ENCODE measurements at regions of chr5 and their contacts with region 1.

Region 1: GRCh38 chr5:120382833-120383232 is 81.3 kb upstream of the PRR16 start:
- DNase-seq: no peak
- H3K4me3 Mint-ChIP-seq: no peak overlapping the region
- H3K27ac Mint-ChIP-seq: no peak overlapping the region
- H3K4me1 Mint-ChIP-seq: peaks cover 7% of the 10 kb centered on the region
- H3K27me3 Mint-ChIP-seq: no peaks in the 10 kb centered on the region

Region 2: GRCh38 chr5:119873611-119874010 is 509.2 kb before region 1 on chr5:
- intact Hi-C with region 1: no loop called
- DNase-seq: no peak
- H3K4me3 Mint-ChIP-seq: no peak overlapping the region
- H3K27ac Mint-ChIP-seq: no peak overlapping the region
- H3K4me1 Mint-ChIP-seq: no peaks in the 10 kb centered on the region
- H3K27me3 Mint-ChIP-seq: no peaks in the 10 kb centered on the region

Region 3: DNA sequence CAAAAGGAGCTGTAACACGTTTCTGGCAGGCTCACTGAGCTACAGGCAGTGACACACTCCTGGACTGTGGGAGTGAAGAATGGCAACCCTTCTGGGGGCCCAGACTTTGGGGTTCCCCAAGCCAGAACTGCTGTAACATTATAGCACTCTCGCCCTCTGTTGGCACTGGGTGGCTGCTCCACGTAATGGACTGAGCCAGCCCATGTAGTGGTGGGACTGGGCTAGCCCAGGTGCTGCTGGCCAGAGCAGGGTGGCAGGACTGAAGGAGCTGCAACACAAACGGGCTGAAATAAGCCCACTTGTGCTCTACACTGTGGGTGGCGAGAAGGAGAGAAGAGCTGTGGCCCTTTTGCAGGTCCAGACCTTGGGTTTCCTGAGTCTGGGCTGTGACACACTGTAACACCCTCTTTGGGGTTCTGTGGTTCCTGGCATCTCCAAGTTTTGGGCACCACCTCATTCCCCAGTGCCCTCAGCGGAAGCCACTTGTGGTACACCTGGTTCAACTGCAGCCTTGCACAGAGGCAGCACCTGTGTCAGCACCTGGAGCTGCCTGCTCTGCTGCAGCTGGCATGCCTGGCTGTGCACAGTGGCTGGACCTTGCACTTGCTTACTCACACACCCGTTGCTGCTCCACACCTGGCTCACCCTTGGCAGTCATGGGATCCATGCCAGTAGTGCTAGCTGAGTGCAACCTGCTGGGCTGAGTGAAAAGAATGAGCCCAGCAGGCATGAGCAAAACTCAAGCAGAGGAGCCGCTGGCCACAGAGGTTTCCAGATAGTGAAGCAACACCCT is 13.7 kb before region 1 on chr5:
- intact Hi-C with region 1: loop called (anchors 1 kb)
- DNase-seq: no peak
- H3K4me3 Mint-ChIP-seq: no peak overlapping the region
- H3K27ac Mint-ChIP-seq: no peak overlapping the region
- H3K4me1 Mint-ChIP-seq: no peaks in the 10 kb centered on the region
- H3K27me3 Mint-ChIP-seq: no peaks in the 10 kb centered on the region